Lower lobe of right lung (tissue), 2 donors: ENCODE measurements at regions of chr1 and their contacts with region 1.

Region 1: DNA sequence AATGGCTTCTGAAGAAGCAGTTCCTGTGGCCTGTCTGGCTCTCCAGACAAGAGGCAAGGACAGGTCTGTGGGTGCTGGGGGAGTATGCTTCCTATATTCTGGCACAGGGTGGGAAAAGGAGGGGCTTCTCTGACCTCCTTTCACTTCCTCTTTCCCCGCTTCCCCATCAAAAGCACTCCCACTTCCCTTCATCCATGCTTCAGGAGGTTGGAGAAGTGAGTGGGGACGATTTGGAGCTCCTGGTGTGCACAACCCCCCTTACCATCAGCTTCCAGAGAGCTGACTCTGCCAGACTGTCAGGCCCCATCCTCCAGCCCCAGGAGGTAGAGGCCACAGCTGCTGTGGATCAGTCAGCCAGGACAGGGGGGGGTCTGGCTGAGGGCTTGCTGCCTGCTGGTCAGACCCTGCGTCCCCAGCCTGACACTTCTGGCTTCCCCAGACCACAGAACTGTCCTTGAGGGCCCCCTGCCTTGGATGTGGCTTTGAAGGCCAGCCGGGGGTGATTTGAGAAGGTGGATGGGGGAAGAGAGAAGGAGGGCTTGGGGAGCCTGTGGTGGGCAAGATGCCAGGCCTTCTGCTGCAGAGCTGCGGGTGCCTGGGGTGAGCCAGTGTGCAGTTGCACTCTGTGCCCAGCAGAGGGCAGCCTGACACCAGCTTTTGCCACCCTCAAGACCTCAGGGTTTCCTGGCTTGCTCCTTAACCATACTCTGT is 21.5 kb upstream of the TMEM222 start:
- DNase-seq: peak; percentile 87
- ATAC-seq: peak; percentile 91 to 94
- H3K4me3 ChIP-seq: no peak overlapping the region
- H3K27ac ChIP-seq: peak overlapping the region; percentile 75
- H3K4me1 ChIP-seq: peaks cover 26% of the 10 kb centered on the region
- H3K27me3 ChIP-seq: no peaks in the 10 kb centered on the region
- CTCF ChIP-seq: peak; percentile 100

Region 2: DNA sequence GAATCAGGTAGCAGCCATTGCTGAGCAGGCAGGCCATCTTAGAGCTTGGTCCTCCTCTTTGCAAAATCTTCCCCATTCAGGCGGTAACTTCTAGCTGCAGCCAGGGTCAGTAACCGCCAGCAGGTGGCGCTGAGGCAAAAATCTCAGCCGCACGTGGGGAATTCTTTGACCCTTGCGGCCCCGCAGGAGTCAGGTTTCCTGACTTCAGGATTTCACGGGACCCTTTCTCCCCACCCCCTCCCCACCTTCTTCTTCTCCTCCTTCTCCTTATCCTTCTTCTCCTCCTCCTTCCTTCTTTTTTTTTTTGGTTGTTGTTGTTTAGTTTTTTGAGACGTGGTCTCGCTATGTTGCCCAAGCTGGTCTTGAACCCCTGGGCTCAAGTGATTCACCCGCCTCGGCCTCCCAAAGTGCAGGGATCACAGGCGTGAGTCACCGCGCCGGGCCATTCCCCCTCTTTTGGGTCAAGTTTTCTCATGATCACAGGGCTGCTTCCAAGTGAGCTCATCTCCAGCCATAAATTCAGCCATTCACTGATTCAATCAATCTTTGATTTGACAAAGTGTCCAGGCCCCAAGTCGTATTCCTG is 254.4 kb before region 1 on chr1:
- intact Hi-C with region 1: no loop called
- DNase-seq: peak; percentile 78
- ATAC-seq: peak; percentile 75 to 82
- H3K4me3 ChIP-seq: no peak overlapping the region
- H3K27ac ChIP-seq: no peak overlapping the region
- H3K4me1 ChIP-seq: peaks cover 19% of the 10 kb centered on the region
- H3K27me3 ChIP-seq: no peaks in the 10 kb centered on the region
- CTCF ChIP-seq: peak; percentile 92

Region 3: DNA sequence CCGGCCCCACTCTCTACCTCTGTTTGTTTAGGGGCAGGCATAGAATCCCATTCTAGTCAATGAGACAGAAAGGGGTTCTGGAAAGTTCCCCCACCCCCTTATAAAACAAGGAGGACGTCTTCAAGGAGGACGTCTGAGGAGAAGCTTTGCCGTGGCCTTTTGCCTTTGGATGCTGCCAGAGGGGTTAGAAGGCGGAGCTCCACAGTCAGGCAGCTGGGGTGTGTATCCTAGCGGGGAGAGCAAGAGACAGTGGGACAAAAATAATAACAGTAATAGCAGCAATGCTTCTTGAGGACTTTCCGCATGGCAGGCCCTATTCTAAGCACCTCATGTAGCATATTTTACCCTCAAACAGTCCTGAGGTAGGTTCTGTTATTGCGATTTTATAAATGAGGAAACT is 239.6 kb before region 1 on chr1:
- intact Hi-C with region 1: no loop called
- DNase-seq: no peak
- ATAC-seq: peak in 1 of 2 donors; percentile 56
- H3K4me3 ChIP-seq: no peak overlapping the region
- H3K27ac ChIP-seq: no peak overlapping the region
- H3K4me1 ChIP-seq: no peaks in the 10 kb centered on the region
- H3K27me3 ChIP-seq: no peaks in the 10 kb centered on the region
- CTCF ChIP-seq: no peak

Region 4: DNA sequence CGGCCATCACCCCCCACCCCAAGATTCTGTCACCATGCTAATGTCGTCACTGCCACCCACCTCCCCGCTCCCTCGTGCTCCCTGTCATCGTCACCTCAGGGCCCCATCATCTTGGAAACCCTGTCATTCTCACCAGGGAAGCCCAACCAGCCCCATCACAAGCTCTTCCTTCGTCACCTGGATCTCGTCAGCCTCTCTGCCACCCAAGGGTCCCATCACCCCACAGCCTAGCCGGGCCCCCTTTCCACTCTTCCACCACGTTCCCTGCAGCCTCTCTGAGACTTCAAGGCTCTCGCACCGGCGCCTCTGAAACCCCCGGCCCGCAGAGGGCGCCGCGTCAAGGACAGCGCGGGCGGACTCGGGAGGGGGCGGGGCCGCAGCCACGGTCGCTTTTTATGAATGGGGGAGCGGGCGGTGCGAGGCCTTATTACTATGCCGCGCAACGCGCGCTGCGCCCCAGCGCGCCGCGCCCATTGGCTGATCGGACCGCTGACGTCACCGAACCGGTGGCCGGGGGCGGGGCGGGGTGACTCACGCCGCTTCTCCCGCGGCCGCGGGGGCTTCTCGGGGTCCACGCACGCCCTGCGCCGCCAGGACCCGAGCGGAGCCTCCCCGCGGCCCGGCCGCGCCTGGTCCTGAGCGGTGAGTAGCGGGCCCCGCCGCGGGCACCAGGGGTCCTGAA is 91.7 kb after region 1 on chr1 and contains the start of gene GPR3:
- intact Hi-C with region 1: loop called (anchors 10 kb)
- DNase-seq: peak; percentile 89
- ATAC-seq: peak; percentile 89 to 91
- H3K4me3 ChIP-seq: peak within 1 kb of the TSS; percentile 52
- H3K27ac ChIP-seq: peak within 1 kb of the TSS; percentile 39
- H3K4me1 ChIP-seq: peaks cover 34% of the 10 kb centered on the region
- H3K27me3 ChIP-seq: no peaks in the 10 kb centered on the region
- CTCF ChIP-seq: peak; percentile 60
- total RNA-seq, gene GPR3: 0.18 TPM